ENCODE measurements at regions of chr21 and their contacts with region 1.

Region 1: DNA sequence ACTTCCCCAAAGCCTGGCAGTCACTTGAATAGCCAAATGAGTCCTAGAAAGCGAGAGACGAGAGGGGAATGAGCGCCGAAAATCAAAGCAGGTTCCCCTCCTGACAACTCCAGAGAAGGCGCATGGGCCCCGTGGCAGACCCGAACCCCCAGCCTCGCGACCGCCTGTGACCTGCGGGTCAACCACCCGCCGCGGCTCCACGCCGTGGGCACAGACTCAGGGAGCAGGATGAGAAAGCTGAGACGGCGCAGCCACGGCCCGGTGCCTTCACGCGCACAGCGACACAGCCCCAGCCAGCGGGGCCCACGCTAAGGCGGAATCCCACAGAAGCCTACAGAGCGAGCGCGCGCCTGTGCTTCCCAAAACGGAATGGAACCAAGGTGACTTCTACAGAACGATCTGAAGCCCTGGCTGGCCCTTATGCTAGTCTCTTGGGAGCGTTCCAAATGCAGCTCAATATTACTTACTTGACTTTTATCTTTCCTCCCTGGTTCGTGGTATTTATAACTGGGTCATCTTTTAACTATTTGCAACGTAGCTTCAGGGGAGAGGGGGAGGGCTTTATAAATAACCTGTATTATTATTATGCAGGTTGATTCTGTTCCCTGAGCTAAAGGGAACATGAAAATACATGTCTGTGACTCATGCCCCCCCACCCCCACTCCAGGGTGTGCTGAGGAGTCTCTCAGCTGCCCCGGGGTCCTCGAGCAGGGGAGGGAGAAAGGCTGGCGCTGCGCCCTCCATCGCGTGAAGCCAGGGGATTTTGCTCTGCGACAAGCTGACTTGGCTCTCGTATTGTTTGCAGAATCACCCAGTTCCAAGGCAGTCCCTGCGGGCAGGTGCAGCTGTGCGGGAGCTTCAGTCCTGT is 1.7 kb downstream of the TSPEAR start:
- DNase-seq: peak; percentile 78

Region 2: DNA sequence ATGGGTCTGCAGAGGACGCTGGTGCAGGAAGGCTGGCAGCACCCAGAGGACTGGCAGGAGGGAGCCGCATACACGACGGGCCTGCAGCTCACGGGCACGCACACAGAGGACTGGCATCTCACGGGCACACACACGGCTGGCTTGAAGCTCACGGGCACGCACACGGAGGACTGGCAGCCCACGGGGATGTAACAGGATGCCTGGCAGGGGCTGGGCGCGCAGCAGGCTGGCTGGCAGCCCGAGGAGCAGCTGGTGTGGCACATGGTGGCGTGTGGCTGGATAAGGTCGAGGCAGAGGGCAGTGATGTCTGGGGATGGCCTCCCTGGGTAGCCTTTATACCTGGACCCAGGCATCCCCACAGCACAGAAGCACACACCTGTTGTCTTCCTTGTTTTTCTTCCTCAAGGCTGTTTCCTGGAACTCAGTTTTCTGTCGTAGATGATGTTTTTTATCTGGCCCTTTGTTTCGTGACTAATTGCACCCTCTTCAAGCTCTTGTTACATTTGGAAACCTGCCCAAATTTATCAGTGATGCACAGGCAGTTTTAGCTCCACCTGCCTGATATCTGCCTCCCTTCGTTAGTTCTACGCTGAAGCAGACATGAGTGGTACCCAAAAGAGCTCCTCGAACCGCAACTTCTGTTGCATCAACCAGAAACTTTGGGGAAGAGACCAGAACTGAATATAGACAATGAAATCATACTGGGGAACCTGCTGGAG is 27.6 kb before region 1 on chr21 and contains the start of gene KRTAP12-1:
- intact Hi-C with region 1: loop called in 1 of 2 experiments (anchors 1 kb)
- DNase-seq: no peak
- total RNA-seq, gene KRTAP12-1: not detected

Measured in posterior vena cava (tissue), 2 donors.